OCI-LY7 (cell line): ENCODE measurements at regions of chr16 and their contacts with region 1.

Region 1: GRCh38 chr16:47311738-47312505 is 148.9 kb downstream of the ITFG1 start:
- DNase-seq: peak; percentile 49
- H3K4me3 ChIP-seq: peak overlapping the region; percentile 43
- H3K27ac ChIP-seq: peak overlapping the region; percentile 80
- H3K4me1 ChIP-seq: peaks cover 31% of the 10 kb centered on the region
- CTCF ChIP-seq: no peak

Region 2: GRCh38 chr16:47475786-47476185 is 163.9 kb after region 1 on chr16:
- CTCF ChIA-PET with region 1: no interaction called
- POLR2A ChIA-PET with region 1: interaction called, 3 read pairs
- intact Hi-C with region 1: loop called (anchors 5 kb)
- DNase-seq: no peak
- H3K4me3 ChIP-seq: no peak overlapping the region
- H3K27ac ChIP-seq: no peak overlapping the region
- H3K4me1 ChIP-seq: no peaks in the 10 kb centered on the region
- CTCF ChIP-seq: no peak